ENCODE measurements at regions of chr3 and their contacts with region 1.

Region 1: GRCh38 chr3:16399473-16399872 is 114.0 kb downstream of the RFTN1 start:
- DNase-seq: no peak
- ATAC-seq: peak; percentile 75
- H3K4me3 ChIP-seq: no peak overlapping the region
- H3K27ac ChIP-seq: peak overlapping the region; percentile 60
- H3K4me1 ChIP-seq: peaks cover 13% of the 10 kb centered on the region
- H3K27me3 ChIP-seq: no peaks in the 10 kb centered on the region
- CTCF ChIP-seq: peak in 2 of 3 experiments; percentile 7 to 21; a peak in 2 of 6 replicates
- EP300 ChIP-seq: no peak
- POLR2A ChIP-seq: no peak
- RAD21 ChIP-seq: no peak

Region 2: GRCh38 chr3:16033889-16034687 is 365.4 kb before region 1 on chr3:
- CTCF ChIA-PET with region 1: no interaction called
- POLR2A ChIA-PET with region 1: no interaction called
- RAD21 ChIA-PET with region 1: no interaction called
- SMC1A ChIA-PET with region 1: no interaction called
- in situ Hi-C with region 1: no loop called
- intact Hi-C with region 1: no loop called
- DNase-seq: no peak
- ATAC-seq: no peak
- H3K4me3 ChIP-seq: no peak overlapping the region
- H3K27ac ChIP-seq: no peak overlapping the region
- H3K4me1 ChIP-seq: no peaks in the 10 kb centered on the region
- H3K27me3 ChIP-seq: no peaks in the 10 kb centered on the region; a peak in 2 of 4 replicates
- CTCF ChIP-seq: no peak
- EP300 ChIP-seq: no peak
- POLR2A ChIP-seq: no peak
- RAD21 ChIP-seq: no peak

Region 3: GRCh38 chr3:16064642-16065414 is 334.6 kb before region 1 on chr3:
- CTCF ChIA-PET with region 1: no interaction called
- POLR2A ChIA-PET with region 1: no interaction called
- RAD21 ChIA-PET with region 1: no interaction called
- SMC1A ChIA-PET with region 1: no interaction called
- in situ Hi-C with region 1: no loop called
- intact Hi-C with region 1: no loop called
- DNase-seq: no peak
- ATAC-seq: no peak
- H3K4me3 ChIP-seq: no peak overlapping the region
- H3K27ac ChIP-seq: no peak overlapping the region
- H3K4me1 ChIP-seq: no peaks in the 10 kb centered on the region
- H3K27me3 ChIP-seq: no peaks in the 10 kb centered on the region
- CTCF ChIP-seq: no peak
- EP300 ChIP-seq: no peak
- POLR2A ChIP-seq: no peak
- RAD21 ChIP-seq: no peak

Region 4: DNA sequence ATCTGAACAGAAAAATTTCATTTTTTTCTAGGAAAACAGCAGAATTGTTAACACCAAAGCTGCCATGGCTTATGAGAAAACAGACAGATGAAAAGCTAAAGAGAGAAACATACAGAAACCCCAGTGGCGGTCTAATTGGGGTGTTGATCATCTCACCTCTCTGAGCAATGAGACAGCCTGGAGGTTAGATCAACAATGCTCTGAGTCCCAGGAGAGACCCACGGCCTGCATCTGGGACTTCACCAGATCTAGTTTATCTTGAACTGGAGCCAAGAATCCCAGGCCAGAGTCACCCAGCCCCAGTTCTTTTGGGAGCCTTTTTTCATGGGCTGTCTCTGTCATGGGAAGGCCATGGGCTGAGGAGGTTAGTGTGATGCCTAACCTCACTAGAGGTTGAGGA is 228.5 kb before region 1 on chr3:
- CTCF ChIA-PET with region 1: no interaction called
- POLR2A ChIA-PET with region 1: no interaction called
- RAD21 ChIA-PET with region 1: no interaction called
- SMC1A ChIA-PET with region 1: no interaction called
- in situ Hi-C with region 1: no loop called
- intact Hi-C with region 1: no loop called
- DNase-seq: no peak
- ATAC-seq: no peak
- H3K4me3 ChIP-seq: no peak overlapping the region
- H3K27ac ChIP-seq: no peak overlapping the region
- H3K4me1 ChIP-seq: no peaks in the 10 kb centered on the region
- H3K27me3 ChIP-seq: peaks cover 0 to 3% of the 10 kb centered on the region in 2 experiments; a peak in 2 of 4 replicates
- CTCF ChIP-seq: no peak
- EP300 ChIP-seq: no peak
- POLR2A ChIP-seq: no peak
- RAD21 ChIP-seq: no peak

Region 5: GRCh38 chr3:16388850-16389441 is 10.5 kb before region 1 on chr3:
- CTCF ChIA-PET with region 1: interaction called, 4 read pairs
- POLR2A ChIA-PET with region 1: interaction called, 5 read pairs
- RAD21 ChIA-PET with region 1: interaction called, 8 read pairs
- SMC1A ChIA-PET with region 1: interaction called, 13 read pairs
- in situ Hi-C with region 1: no loop called
- intact Hi-C with region 1: no loop called
- DNase-seq: no peak
- ATAC-seq: no peak
- H3K4me3 ChIP-seq: no peak overlapping the region
- H3K27ac ChIP-seq: peak overlapping the region; percentile 32; the same call in 1 of the 2 replicates
- H3K4me1 ChIP-seq: peaks cover 23% of the 10 kb centered on the region
- H3K27me3 ChIP-seq: no peaks in the 10 kb centered on the region
- CTCF ChIP-seq: no peak
- EP300 ChIP-seq: no peak
- POLR2A ChIP-seq: no peak
- RAD21 ChIP-seq: no peak

Region 6: DNA sequence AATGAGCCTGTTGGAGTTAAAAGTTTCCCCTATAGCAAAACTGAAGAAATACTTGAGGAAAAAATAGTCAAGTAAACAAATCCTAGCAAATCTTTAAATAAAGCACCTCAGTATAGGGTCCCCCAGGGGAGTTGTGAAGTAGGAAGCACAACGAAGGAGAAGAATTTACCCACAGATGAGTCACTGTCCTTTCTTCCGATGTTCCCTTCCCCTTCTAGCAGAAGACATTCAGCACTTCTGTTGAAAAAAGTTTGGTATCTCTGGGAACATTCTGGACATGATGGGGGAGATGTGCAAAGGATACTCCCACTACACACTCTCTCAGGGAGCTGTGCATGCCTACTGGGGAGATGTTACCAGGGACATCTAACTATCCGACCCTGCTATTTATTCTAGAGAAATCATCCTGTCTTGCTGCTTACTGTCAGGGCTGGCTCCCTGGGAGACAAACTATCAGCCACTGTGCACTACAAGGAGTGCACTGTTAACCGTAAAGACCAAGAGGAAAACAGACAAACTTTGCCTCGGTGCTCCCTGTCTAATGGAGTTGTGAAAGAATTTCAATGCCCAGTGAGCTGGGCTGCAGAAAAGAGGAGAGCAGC is 20.3 kb after region 1 on chr3:
- CTCF ChIA-PET with region 1: interaction called, 3 read pairs
- POLR2A ChIA-PET with region 1: interaction called, 4 read pairs
- RAD21 ChIA-PET with region 1: interaction called, 6 read pairs
- SMC1A ChIA-PET with region 1: interaction called, 12 read pairs
- in situ Hi-C with region 1: no loop called
- intact Hi-C with region 1: no loop called
- DNase-seq: no peak
- ATAC-seq: peak; percentile 4
- H3K4me3 ChIP-seq: no peak overlapping the region
- H3K27ac ChIP-seq: peak overlapping the region; percentile 46; the same call in 1 of the 2 replicates
- H3K4me1 ChIP-seq: peaks cover 24% of the 10 kb centered on the region
- H3K27me3 ChIP-seq: no peaks in the 10 kb centered on the region
- CTCF ChIP-seq: no peak
- EP300 ChIP-seq: no peak
- POLR2A ChIP-seq: no peak
- RAD21 ChIP-seq: no peak